ENCODE measurements at regions of chr10 and their contacts with region 1.

Region 1: GRCh38 chr10:125054669-125055268 is 105.6 kb downstream of the CTBP2 start:
- DNase-seq: no peak
- H3K4me3 ChIP-seq: no peak overlapping the region
- H3K27ac ChIP-seq: peak overlapping the region in 1 of 4 donors; percentile 92
- H3K4me1 ChIP-seq: peaks cover 18 to 60% (median 41%) of the 10 kb centered on the region in 3 donors
- H3K27me3 ChIP-seq: no peaks in the 10 kb centered on the region
- CTCF ChIP-seq: no peak
- POLR2A ChIP-seq: no peak

Region 2: DNA sequence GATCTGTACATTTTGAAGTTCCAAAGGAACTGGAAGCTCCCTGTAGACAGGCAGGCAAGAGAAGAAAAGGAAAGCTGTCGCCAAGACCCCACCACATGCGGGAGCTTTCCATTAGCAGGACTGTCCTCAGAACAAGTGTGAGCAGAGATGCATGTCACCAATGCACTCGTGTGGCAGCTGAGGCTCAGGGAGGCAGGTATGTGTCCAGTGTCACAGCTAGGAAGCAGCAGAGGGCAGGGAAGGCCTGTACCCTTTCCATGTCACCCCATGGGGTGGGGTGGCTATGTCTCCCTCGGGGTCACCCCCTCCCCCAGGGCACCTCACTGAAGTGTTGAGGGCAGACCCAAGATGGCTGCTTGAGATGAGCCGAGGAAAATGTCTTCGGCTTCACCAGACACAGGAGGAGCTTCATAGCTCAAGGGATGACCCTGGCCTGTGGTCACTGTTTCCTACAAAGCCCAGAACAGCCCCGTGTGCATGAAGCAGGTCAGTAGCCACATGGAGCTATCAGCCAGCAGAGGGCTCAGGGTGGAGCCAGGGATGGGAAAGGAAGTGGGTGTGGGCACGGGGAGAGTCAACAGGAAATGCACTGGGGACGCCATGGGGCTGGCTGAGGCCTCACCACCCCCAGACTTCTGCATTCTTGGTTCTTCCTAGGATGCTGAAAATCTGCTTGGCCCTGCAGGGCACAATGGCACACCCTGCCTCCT is 407.2 kb before region 1 on chr10:
- intact Hi-C with region 1: no loop called
- DNase-seq: peak; percentile 50
- H3K4me3 ChIP-seq: no peak overlapping the region
- H3K27ac ChIP-seq: peak overlapping the region; percentile 84 to 90 (median 86)
- H3K4me1 ChIP-seq: peaks cover 75 to 100% (median 88%) of the 10 kb centered on the region in 3 donors
- H3K27me3 ChIP-seq: no peaks in the 10 kb centered on the region
- CTCF ChIP-seq: peak in 5 of 6 experiments; percentile 38 to 63 (median 44)
- POLR2A ChIP-seq: peak in 1 of 4 donors; percentile 28

Region 3: DNA sequence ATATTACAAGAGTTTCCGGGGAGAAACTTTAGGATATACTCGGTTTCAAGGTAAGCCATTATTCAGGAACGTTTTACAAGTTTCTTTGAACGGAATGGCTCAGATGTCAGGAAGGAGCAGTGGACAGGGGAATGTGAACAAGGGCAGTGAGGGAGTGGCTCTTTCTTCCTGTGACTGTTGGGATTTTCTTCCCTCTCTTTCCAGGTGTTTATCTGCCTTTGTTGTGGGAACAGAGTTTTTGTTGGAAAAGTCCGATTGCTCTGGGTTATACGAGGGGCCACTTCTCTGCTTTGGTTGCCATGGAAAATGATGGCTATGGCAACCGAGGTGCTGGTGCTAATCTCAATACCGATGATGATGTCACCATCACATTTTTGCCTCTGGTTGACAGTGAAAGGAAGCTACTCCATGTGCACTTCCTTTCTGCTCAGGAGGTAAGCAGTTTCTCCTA is 71.5 kb before region 1 on chr10:
- intact Hi-C with region 1: no loop called
- DNase-seq: no peak
- H3K4me3 ChIP-seq: no peak overlapping the region
- H3K27ac ChIP-seq: no peak overlapping the region
- H3K4me1 ChIP-seq: no peaks in the 10 kb centered on the region
- H3K27me3 ChIP-seq: no peaks in the 10 kb centered on the region
- CTCF ChIP-seq: no peak
- POLR2A ChIP-seq: no peak

Region 4: DNA sequence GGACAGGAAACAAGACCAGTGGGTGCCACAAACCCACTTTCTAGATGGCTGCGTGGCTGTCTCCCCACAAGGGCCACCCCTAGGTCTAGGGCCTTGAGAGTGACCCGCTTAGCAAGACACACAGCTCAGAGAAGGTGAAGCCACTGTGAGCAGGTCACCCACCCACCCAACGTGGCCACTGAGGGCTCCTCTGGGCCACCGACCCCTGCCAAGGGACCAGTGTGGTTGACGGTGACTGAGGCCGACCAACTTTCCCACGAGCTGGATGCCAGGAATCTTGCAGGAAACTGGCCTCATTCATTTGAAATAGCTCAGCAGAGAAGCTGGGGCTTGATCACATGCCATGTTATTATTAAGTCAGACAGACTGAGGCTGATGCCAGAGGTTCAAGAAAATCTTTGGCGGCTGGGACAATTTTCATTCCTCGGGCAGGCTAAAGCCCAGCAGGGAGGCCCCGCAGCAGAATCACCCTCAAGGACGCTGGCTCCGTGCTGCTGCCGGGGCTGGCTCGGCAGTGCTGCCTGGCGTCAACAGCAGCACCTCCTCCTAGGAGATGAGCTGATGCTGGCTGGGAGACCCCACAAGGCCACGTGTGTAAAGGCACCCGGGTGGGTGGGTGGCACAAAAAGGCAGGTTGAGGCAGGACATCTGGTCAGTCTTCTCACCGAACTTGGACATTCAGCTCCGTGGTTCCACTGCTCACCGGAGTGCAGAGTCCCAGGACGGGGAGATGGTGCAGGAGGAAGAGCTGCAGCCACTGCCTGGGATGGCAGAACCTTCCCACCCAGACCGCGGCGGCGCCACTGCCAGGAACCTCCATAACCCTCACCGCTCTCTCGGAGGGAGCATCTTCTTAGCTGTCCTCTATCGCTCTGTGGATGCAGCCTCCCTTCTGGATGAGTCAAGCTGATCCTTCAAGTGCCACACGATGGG is 55.1 kb before region 1 on chr10:
- intact Hi-C with region 1: loop called (anchors 5 kb)
- DNase-seq: no peak
- H3K4me3 ChIP-seq: no peak overlapping the region
- H3K27ac ChIP-seq: peak overlapping the region; percentile 7 to 80 (median 58)
- H3K4me1 ChIP-seq: peaks cover 0 to 42% (median 30%) of the 10 kb centered on the region in 3 donors
- H3K27me3 ChIP-seq: no peaks in the 10 kb centered on the region
- CTCF ChIP-seq: no peak
- POLR2A ChIP-seq: no peak

Region 5: GRCh38 chr10:125118011-125118611 is 63.3 kb after region 1 on chr10:
- intact Hi-C with region 1: no loop called
- DNase-seq: no peak
- H3K4me3 ChIP-seq: peak overlapping the region in 1 of 4 donors; percentile 5
- H3K27ac ChIP-seq: peak overlapping the region in 3 of 4 donors; percentile 57 to 73 (median 66)
- H3K4me1 ChIP-seq: peaks cover 27 to 96% (median 39%) of the 10 kb centered on the region in 3 donors
- H3K27me3 ChIP-seq: no peaks in the 10 kb centered on the region
- CTCF ChIP-seq: no peak
- POLR2A ChIP-seq: no peak

Region 6: GRCh38 chr10:125990974-125991791 is 936.4 kb after region 1 on chr10:
- intact Hi-C with region 1: no loop called
- DNase-seq: no peak
- H3K4me3 ChIP-seq: no peak overlapping the region
- H3K27ac ChIP-seq: no peak overlapping the region
- H3K4me1 ChIP-seq: no peaks in the 10 kb centered on the region
- H3K27me3 ChIP-seq: no peaks in the 10 kb centered on the region
- CTCF ChIP-seq: no peak
- POLR2A ChIP-seq: no peak